Heart right ventricle (tissue), 16 donors: ENCODE measurements at regions of chrX and their contacts with region 1.

Region 1: DNA sequence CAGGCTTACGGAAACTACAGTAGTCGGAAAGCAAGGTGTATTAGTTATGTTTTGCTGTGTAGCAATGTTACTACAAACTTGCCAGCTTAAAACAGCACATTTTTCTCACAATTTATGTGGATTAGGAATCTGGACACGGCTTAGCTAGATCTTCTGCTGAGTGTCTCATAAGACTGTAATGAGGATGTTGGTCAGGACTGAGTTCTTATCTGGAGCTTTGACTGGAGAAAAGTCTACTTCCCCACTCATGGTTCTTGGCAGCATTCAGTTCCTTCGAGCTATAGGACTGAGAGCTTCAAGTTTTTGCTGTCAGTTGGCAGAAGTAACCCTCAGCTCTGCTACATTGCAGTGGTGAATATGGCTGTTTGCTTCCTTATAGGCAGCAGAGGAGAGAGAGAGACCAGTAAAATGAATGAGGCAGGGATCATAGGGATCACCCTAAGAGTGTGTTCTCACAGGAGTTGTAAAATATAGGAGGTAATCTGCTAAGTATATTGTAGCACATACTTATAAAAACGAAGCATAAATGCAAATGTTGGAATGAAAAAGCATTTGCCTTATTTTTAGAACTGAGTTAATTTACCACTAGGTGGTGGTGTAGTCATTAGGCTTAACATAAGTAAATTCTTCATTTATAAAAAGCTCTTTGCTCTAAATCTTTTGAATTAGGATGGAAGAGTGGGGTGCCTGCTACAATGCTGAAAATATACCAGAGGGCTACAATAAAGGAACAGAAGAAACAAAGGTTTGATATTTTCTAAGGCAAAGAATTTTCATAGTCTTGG is 38.6 kb downstream of the ALG13 start:
- DNase-seq: no peak
- ATAC-seq: no peak
- H3K4me3 ChIP-seq: no peak overlapping the region
- H3K27ac ChIP-seq: no peak overlapping the region
- H3K4me1 ChIP-seq: no peaks in the 10 kb centered on the region
- H3K27me3 ChIP-seq: peaks cover 0 to 11% (median 0%) of the 10 kb centered on the region in 7 donors
- CTCF ChIP-seq: peak in 6 of 9 donors; percentile 10 to 43 (median 24)

Region 2: GRCh38 chrX:111231251-111231650 is 488.4 kb before region 1 on chrX:
- intact Hi-C with region 1: no loop called
- DNase-seq: no peak
- ATAC-seq: no peak
- H3K4me3 ChIP-seq: no peak overlapping the region
- H3K27ac ChIP-seq: no peak overlapping the region
- H3K4me1 ChIP-seq: no peaks in the 10 kb centered on the region
- H3K27me3 ChIP-seq: peaks cover 0 to 58% (median 0%) of the 10 kb centered on the region in 7 donors
- CTCF ChIP-seq: no peak

Region 3: GRCh38 chrX:111680988-111681779 is 38.4 kb before region 1 on chrX and contains the start of gene ALG13:
- intact Hi-C with region 1: no loop called
- DNase-seq: peak; percentile 86 to 90
- ATAC-seq: peak; percentile 93 to 98 (median 98)
- H3K4me3 ChIP-seq: peak within 1 kb of the TSS; percentile 56 to 86 (median 71)
- H3K27ac ChIP-seq: peak within 1 kb of the TSS; percentile 94 to 100 (median 98)
- H3K4me1 ChIP-seq: peaks cover 0 to 24% (median 7%) of the 10 kb centered on the region in 9 donors
- H3K27me3 ChIP-seq: peaks cover 0 to 18% (median 0%) of the 10 kb centered on the region in 7 donors
- CTCF ChIP-seq: peak; percentile 37 to 79 (median 69)
- total RNA-seq, gene ALG13: 17.3 to 36.6 (median 22.7) TPM

Region 4: GRCh38 chrX:111695297-111695880 is 24.2 kb before region 1 on chrX:
- intact Hi-C with region 1: no loop called
- DNase-seq: no peak
- ATAC-seq: no peak
- H3K4me3 ChIP-seq: no peak overlapping the region
- H3K27ac ChIP-seq: no peak overlapping the region
- H3K4me1 ChIP-seq: no peaks in the 10 kb centered on the region
- H3K27me3 ChIP-seq: no peaks in the 10 kb centered on the region
- CTCF ChIP-seq: no peak

Region 5: GRCh38 chrX:111743316-111743715 is 23.7 kb after region 1 on chrX:
- intact Hi-C with region 1: loop called in 1 of 10 experiments (anchors 1 kb)
- DNase-seq: no peak
- ATAC-seq: no peak
- H3K4me3 ChIP-seq: no peak overlapping the region
- H3K27ac ChIP-seq: no peak overlapping the region
- H3K4me1 ChIP-seq: no peaks in the 10 kb centered on the region
- H3K27me3 ChIP-seq: peaks cover 0 to 7% (median 0%) of the 10 kb centered on the region in 7 donors
- CTCF ChIP-seq: no peak